ENCODE measurements at regions of chr10 and their contacts with region 1.

Region 1: GRCh38 chr10:11515596-11516430 is 95.6 kb downstream of the USP6NL start:
- DNase-seq: no peak
- ATAC-seq: peak; percentile 72
- H3K4me3 Mint-ChIP-seq: peak overlapping the region; percentile 46
- H3K27ac Mint-ChIP-seq: peak overlapping the region; percentile 82
- H3K4me1 Mint-ChIP-seq: peaks cover 53% of the 10 kb centered on the region
- H3K27me3 Mint-ChIP-seq: no peaks in the 10 kb centered on the region
- CTCF ChIP-seq: peak; percentile 86

Region 2: DNA sequence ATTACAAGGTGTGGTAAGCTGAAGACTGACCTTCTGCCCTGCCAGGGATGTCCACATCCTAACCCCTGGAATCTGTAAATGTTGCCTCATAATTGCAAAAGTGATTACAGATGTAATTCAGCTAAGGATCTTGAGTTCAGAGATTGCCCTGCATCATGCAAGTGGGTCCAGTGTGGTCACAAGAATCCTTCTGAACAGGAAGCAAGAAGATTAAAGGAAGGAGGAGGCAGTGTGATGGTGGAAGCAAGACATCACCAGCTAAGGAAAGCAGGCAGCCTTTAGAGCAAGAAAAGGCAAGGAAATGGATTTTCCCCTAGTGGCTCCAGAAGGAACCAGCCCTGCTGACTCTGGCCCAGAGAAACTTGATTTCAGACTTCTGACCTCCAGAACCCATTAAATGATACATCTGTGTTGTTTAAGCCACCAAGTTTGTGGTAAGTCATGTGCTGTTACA is 17.5 kb after region 1 on chr10:
- CTCF ChIA-PET with region 1: interaction called, 5 read pairs
- POLR2A ChIA-PET with region 1: no interaction called
- intact Hi-C with region 1: loop called (anchors 2 kb)
- DNase-seq: no peak
- ATAC-seq: no peak
- H3K4me3 Mint-ChIP-seq: peak overlapping the region; percentile 56
- H3K27ac Mint-ChIP-seq: peak overlapping the region; percentile 84
- H3K4me1 Mint-ChIP-seq: peaks cover 92% of the 10 kb centered on the region
- H3K27me3 Mint-ChIP-seq: no peaks in the 10 kb centered on the region
- CTCF ChIP-seq: no peak

Region 3: GRCh38 chr10:11560076-11560709 is 44.4 kb after region 1 on chr10:
- CTCF ChIA-PET with region 1: no interaction called
- POLR2A ChIA-PET with region 1: no interaction called
- intact Hi-C with region 1: loop called (anchors 1 kb)
- DNase-seq: no peak
- ATAC-seq: peak; percentile 79
- H3K4me3 Mint-ChIP-seq: peak overlapping the region; percentile 64
- H3K27ac Mint-ChIP-seq: peak overlapping the region; percentile 88
- H3K4me1 Mint-ChIP-seq: peaks cover 91% of the 10 kb centered on the region
- H3K27me3 Mint-ChIP-seq: no peaks in the 10 kb centered on the region
- CTCF ChIP-seq: no peak

Region 4: GRCh38 chr10:11678074-11678793 is 162.4 kb after region 1 on chr10:
- CTCF ChIA-PET with region 1: interaction called, 3 read pairs
- POLR2A ChIA-PET with region 1: interaction called, 5 read pairs
- intact Hi-C with region 1: loop called (anchors 1 kb)
- DNase-seq: peak; percentile 51
- ATAC-seq: peak; percentile 80
- H3K4me3 Mint-ChIP-seq: peak overlapping the region; percentile 77
- H3K27ac Mint-ChIP-seq: peak overlapping the region; percentile 94
- H3K4me1 Mint-ChIP-seq: peaks cover 94% of the 10 kb centered on the region
- H3K27me3 Mint-ChIP-seq: no peaks in the 10 kb centered on the region
- CTCF ChIP-seq: no peak

Region 5: DNA sequence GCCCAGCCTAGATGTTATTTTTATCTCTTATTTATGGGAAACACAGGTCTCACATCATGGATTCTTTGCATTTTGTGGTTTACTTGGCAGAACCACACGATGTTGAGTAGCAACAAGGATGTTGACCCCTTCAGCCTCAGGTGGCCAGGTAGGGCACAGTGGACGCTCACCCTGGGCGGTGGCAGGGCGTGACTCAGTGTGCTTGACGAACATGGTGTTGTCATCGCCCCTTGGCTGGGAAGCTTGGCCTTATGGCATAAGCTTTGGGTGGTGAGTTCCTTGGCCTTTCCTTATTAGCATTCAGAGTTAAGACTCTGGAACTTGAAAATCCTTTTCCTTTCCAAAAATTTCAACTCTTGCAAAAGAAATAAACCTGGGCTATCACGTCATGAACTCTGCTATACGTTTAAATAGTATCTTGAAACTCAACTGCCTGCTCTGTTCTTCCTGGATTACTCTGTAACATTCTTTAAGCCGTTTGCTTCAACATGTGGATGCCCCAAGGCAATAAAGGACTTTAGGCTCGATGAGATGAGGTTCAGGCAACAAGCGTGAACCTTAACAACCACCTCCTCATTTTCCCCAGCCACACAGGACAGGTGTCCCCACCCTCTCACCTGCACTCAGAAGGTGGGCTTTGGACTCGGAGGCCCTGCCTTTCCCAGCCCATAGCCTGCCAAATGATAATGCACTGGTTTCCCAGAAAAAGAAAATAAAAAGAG is 203.8 kb after region 1 on chr10:
- CTCF ChIA-PET with region 1: interaction called, 92 read pairs
- POLR2A ChIA-PET with region 1: interaction called, 6 read pairs
- intact Hi-C with region 1: loop called (anchors 2 kb)
- DNase-seq: no peak
- ATAC-seq: no peak
- H3K4me3 Mint-ChIP-seq: peak overlapping the region; percentile 19
- H3K27ac Mint-ChIP-seq: peak overlapping the region; percentile 43
- H3K4me1 Mint-ChIP-seq: peaks cover 55% of the 10 kb centered on the region
- H3K27me3 Mint-ChIP-seq: no peaks in the 10 kb centered on the region
- CTCF ChIP-seq: no peak

Region 6: GRCh38 chr10:11742005-11742778 is 226.4 kb after region 1 on chr10 and contains the start of gene ECHDC3:
- CTCF ChIA-PET with region 1: no interaction called
- POLR2A ChIA-PET with region 1: no interaction called
- intact Hi-C with region 1: loop called (anchors 1 kb)
- DNase-seq: peak; percentile 69
- ATAC-seq: peak; percentile 91
- H3K4me3 Mint-ChIP-seq: peak within 1 kb of the TSS; percentile 77
- H3K27ac Mint-ChIP-seq: peak within 1 kb of the TSS; percentile 41
- H3K4me1 Mint-ChIP-seq: peaks cover 23% of the 10 kb centered on the region
- H3K27me3 Mint-ChIP-seq: no peaks in the 10 kb centered on the region
- CTCF ChIP-seq: no peak
- total RNA-seq, gene ECHDC3: 10.1 and 12.5 TPM in 2 replicates